ENCODE measurements at regions of chr1 and their contacts with region 1.

Region 1: DNA sequence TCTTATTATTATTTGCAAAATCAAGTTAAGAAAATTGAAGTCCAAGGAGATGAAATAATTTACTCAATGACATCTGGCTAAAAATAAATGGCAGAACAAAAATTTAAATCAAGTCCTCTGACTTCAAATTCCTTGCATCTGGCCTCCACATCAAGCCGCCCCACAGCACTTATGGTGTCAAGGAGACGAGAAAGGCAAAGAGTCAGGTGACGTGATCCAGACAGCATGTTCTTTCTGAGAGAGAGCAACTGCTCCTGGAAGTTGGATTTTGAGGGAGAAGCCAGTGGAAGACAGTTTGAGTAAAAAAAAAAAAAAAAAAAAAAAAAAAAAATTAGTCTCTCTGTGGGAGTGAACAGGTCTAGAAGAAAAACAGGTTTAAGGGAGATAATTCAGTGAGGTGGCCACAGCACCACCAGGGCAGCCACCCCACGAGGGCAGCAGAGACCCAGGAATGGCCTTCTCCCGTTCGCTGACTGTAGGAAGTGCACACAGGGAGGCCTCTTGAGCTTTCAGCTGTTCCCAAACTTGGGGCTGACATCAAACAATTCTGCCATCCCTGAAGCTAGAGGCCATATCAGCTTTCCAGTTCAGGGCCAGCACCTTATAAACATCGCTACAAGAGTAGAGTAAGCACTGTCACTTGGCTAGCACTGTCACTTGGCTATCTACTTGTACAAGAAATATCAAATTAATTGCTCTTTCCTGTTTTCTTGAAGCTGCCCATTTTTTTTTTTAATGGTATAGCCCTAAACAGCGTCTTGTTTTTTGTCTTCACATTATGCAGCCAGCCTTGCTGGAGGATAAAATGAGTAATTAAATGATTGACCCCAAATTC is 7.8 kb downstream of the C1orf162 start:
- DNase-seq: peak; percentile 71 to 75
- ATAC-seq: peak; percentile 94 to 95
- H3K4me3 ChIP-seq: no peak overlapping the region
- H3K27ac ChIP-seq: peak overlapping the region; percentile 15 to 52 (median 27)
- H3K4me1 ChIP-seq: peaks cover 8 to 12% of the 10 kb centered on the region in 2 donors
- H3K27me3 ChIP-seq: no peaks in the 10 kb centered on the region
- CTCF ChIP-seq: peak; percentile 58 to 72 (median 68)
- POLR2A ChIP-seq: no peak

Region 2: GRCh38 chr1:111507411-111508201 is 26.0 kb after region 1 on chr1:
- in situ Hi-C with region 1: no loop called
- intact Hi-C with region 1: loop called (anchors 2 kb)
- DNase-seq: peak; percentile 47 to 68
- ATAC-seq: peak; percentile 78 to 86
- H3K4me3 ChIP-seq: peak overlapping the region; percentile 47 to 55 (median 48)
- H3K27ac ChIP-seq: peak overlapping the region; percentile 85 to 92 (median 90)
- H3K4me1 ChIP-seq: peaks cover 17 to 35% of the 10 kb centered on the region in 2 donors
- H3K27me3 ChIP-seq: no peaks in the 10 kb centered on the region
- CTCF ChIP-seq: no peak
- POLR2A ChIP-seq: peak in 1 of 2 donors; percentile 10

Region 3: GRCh38 chr1:111709986-111710385 is 228.4 kb after region 1 on chr1:
- in situ Hi-C with region 1: no loop called
- intact Hi-C with region 1: loop called (anchors 5 kb)
- DNase-seq: no peak
- ATAC-seq: no peak
- H3K4me3 ChIP-seq: no peak overlapping the region
- H3K27ac ChIP-seq: no peak overlapping the region
- H3K4me1 ChIP-seq: no peaks in the 10 kb centered on the region
- H3K27me3 ChIP-seq: no peaks in the 10 kb centered on the region
- CTCF ChIP-seq: no peak
- POLR2A ChIP-seq: no peak

Region 4: DNA sequence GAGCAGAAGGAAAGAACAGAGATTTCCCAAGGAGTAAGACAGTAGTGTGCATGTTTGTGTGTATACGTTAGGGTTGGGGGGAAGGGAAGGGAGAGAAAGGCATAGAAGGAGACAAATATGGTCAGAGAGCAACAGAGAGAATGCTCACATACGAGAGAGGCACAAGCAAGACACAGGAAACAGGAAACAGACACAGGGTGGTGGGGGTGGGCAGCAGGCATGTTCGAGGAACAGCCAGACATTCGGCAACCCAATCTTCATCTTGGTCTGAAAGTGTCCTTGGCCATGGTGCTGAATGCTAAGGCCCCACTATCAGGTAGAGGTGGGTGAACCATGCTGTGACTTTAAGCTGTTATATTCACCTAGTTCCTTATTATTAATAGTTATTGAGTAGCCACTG is 383.2 kb after region 1 on chr1:
- in situ Hi-C with region 1: no loop called
- intact Hi-C with region 1: no loop called
- DNase-seq: no peak
- ATAC-seq: no peak
- H3K4me3 ChIP-seq: no peak overlapping the region
- H3K27ac ChIP-seq: no peak overlapping the region
- H3K4me1 ChIP-seq: no peaks in the 10 kb centered on the region
- H3K27me3 ChIP-seq: no peaks in the 10 kb centered on the region
- CTCF ChIP-seq: no peak
- POLR2A ChIP-seq: no peak